Natural killer cell (primary cell): ENCODE measurements at regions of chr3 and their contacts with region 1.

Region 1: DNA sequence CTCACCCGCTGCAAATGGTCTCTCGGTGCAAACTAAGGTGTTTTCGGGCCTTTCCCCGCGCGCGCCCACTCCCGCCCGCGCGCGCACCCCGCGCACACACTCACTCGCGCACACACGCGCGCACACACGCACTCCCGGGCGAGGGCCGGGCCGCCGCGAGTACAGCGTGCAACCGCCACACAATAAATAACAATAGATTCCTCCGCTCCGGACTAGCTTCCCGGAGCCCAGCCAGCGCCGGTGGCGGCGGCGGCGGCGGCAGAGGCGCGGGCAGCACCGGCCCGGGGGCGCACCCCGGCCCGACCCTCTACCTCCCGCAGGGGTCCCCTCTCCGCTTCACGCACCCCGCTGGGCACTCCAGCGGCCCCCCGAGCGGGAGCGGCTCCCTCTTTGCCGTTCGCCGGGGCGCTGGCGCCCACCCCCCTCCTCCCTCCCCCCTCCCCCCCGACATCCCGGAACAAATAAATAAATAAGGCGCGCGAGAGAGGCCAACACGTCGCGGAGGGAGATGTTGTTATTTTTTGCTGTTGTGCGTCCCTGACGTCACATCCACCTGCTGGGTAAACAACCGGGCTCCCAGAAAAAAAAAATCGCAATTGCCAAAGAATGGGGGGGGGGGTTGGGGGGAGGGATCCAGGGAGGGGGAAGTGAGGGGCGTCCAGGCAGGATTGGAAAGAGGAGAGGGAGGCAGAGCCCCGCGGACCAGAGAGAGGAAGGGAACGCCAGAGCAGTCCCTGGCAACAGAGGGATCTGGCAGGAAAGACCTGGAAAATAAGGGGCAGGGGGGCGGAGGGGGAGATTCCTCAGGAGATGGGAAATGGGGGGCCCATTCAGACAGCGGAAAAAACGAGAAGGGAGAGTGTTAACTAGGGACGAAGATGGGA is at the start of gene FOXP1:
- DNase-seq: peak; percentile 63 to 89
- ATAC-seq: peak; percentile 60 to 75 (median 67)
- H3K4me3 ChIP-seq: peak within 1 kb of the TSS; percentile 77
- H3K4me3 Mint-ChIP-seq: peak within 1 kb of the TSS; percentile 98
- H3K27ac ChIP-seq: peak within 1 kb of the TSS; percentile 80
- H3K27ac Mint-ChIP-seq: peak within 1 kb of the TSS; percentile 90 to 94
- H3K4me1 ChIP-seq: peaks cover 25% of the 10 kb centered on the region
- H3K4me1 Mint-ChIP-seq: peaks cover 27 to 47% of the 10 kb centered on the region in 2 donors
- H3K27me3 ChIP-seq: no peaks in the 10 kb centered on the region
- H3K27me3 Mint-ChIP-seq: peaks cover 6 to 11% of the 10 kb centered on the region in 2 donors
- CTCF ChIP-seq: no peak
- total RNA-seq, gene FOXP1: 166 to 185 (median 166) TPM

Region 2: DNA sequence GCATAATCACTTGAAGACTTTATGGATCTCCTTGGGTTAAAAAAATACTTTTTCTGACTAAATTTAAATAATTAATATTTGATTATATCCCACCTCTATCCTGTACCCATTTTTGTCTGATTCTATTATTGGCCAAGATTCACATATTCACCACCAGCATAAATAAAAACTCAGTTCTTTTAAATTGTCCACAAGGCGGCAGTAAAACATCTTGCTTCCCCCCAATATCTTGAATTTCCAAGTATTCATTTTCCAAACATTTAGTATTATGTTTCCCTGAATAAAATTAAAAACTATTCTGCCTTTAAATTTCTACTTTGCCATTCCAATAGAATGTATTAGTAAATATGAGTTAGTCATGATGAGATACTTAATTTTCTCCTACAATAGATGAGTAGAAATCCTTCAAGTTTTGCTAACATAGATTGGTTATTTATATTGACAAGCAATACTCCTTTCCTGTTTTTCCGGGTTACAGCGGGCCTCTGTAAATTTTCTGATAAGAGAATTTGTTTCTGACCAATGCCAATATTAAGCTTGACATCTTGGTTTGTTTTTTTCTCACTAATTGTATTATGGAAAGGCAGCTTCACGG is 1052.6 kb before region 1 on chr3:
- intact Hi-C with region 1: loop called (anchors 1 kb)
- DNase-seq: peak in 1 of 2 donors; percentile 31
- ATAC-seq: no peak
- H3K4me3 ChIP-seq: no peak overlapping the region
- H3K4me3 Mint-ChIP-seq: no peak overlapping the region
- H3K27ac ChIP-seq: no peak overlapping the region
- H3K27ac Mint-ChIP-seq: no peak overlapping the region
- H3K4me1 ChIP-seq: no peaks in the 10 kb centered on the region
- H3K4me1 Mint-ChIP-seq: no peaks in the 10 kb centered on the region
- H3K27me3 ChIP-seq: no peaks in the 10 kb centered on the region
- H3K27me3 Mint-ChIP-seq: peaks cover 4 to 16% of the 10 kb centered on the region in 2 donors
- CTCF ChIP-seq: peak; percentile 31

Region 3: GRCh38 chr3:71006810-71007785 is 576.7 kb before region 1 on chr3:
- intact Hi-C with region 1: loop called (anchors 1 kb)
- DNase-seq: peak in 1 of 2 donors; percentile 63
- ATAC-seq: peak; percentile 61 to 76 (median 76)
- H3K4me3 ChIP-seq: no peak overlapping the region
- H3K4me3 Mint-ChIP-seq: no peak overlapping the region
- H3K27ac ChIP-seq: no peak overlapping the region
- H3K27ac Mint-ChIP-seq: peak overlapping the region; percentile 69 to 87
- H3K4me1 ChIP-seq: peaks cover 12% of the 10 kb centered on the region
- H3K4me1 Mint-ChIP-seq: peaks cover 52% of the 10 kb centered on the region in 2 donors
- H3K27me3 ChIP-seq: no peaks in the 10 kb centered on the region
- H3K27me3 Mint-ChIP-seq: no peaks in the 10 kb centered on the region
- CTCF ChIP-seq: peak; percentile 80

Region 4: DNA sequence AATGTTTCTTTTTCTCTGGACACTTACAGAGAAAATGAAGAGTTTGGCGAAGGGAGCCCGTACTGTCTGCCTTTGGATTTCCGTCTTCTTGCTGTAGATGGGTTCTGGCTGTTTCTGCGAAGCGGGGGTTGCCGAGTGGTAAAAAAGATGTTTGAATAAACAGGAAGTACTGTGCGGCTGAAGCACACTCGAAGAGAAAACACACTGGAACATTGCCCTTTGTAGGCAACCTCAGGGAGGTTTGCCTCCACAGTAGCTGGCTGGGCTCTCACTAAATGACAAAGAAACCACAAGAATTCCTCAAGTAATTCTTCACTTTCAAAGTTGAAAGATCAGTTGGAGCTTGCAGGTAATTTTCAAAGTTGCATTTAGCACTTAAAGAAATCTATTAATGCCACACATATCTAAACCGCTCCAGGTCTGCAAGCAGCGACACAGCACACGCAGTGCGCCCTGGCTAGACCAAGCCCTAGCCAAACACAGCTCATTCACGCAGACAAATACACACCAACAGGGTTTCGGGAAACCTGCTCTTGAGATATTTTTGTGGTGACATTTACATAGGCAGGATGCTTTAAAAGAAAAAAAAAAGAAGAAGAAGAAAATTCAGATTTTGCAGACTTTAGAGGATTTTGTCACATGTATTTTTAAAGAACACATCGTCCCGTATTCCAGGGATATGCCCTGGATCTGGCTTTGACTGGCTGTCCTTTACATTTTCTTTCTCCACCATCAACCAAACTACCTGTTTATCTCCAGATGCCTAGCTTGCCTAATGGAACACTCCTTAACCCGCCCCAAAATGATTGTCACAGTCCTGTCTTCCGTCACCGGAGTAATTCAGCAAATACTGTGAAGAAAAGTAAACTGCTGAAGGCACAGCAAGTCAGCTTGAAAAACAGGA is 453.1 kb before region 1 on chr3:
- intact Hi-C with region 1: loop called (anchors 2 kb)
- DNase-seq: peak; percentile 62 to 88
- ATAC-seq: peak; percentile 74 to 87 (median 84)
- H3K4me3 ChIP-seq: peak overlapping the region; percentile 63
- H3K4me3 Mint-ChIP-seq: peak overlapping the region; percentile 95
- H3K27ac ChIP-seq: peak overlapping the region; percentile 86
- H3K27ac Mint-ChIP-seq: peak overlapping the region; percentile 93 to 98
- H3K4me1 ChIP-seq: peaks cover 18% of the 10 kb centered on the region
- H3K4me1 Mint-ChIP-seq: peaks cover 62 to 69% of the 10 kb centered on the region in 2 donors
- H3K27me3 ChIP-seq: no peaks in the 10 kb centered on the region
- H3K27me3 Mint-ChIP-seq: no peaks in the 10 kb centered on the region
- CTCF ChIP-seq: no peak

Region 5: GRCh38 chr3:71305231-71306206 is 278.3 kb before region 1 on chr3:
- intact Hi-C with region 1: loop called (anchors 5 kb)
- DNase-seq: peak in 1 of 2 donors; percentile 45
- ATAC-seq: peak; percentile 64 to 74 (median 64)
- H3K4me3 ChIP-seq: peak overlapping the region; percentile 41
- H3K4me3 Mint-ChIP-seq: peak overlapping the region; percentile 93
- H3K27ac ChIP-seq: peak overlapping the region; percentile 57
- H3K27ac Mint-ChIP-seq: peak overlapping the region; percentile 80 to 93
- H3K4me1 ChIP-seq: peaks cover 14% of the 10 kb centered on the region
- H3K4me1 Mint-ChIP-seq: peaks cover 58 to 60% of the 10 kb centered on the region in 2 donors
- H3K27me3 ChIP-seq: no peaks in the 10 kb centered on the region
- H3K27me3 Mint-ChIP-seq: no peaks in the 10 kb centered on the region
- CTCF ChIP-seq: no peak

Region 6: DNA sequence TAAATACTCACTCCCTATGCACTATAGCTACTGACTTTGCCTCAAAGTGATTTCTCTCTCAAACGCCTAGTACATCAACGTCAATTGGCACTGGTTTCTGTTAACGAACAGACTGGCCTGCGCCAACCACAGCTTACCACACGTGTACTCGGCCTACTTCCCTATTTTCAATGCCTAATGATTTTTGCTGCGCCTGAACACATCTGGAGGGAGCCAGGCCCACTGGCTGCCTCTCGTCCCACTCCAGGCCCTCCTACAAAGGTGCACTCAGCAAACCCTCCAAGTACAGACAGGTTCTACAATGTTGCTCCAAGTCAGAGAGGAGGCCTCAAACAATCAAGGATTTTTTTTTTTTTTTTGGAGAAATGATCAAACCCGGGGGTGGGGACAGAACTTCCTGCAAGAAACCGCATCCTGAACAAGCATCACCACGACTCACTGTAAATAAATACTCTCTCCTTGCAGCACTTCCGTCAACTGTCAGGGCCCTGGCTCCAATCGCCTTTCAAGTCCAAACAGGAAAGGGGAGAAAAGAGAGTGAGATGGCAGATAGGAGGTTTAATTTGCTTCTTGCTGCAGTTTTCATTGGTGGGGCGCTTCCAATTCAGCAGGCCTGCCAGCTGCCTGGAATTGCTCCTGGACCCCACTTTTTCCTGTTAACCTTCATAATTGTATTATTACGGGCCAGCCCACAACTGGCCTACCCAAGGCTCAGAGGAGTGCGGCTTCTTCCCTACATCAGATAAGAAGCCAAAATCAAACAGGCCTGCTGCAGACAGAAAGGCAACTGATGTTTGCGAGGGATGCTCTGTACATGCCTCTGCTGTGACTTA is 139.6 kb before region 1 on chr3:
- intact Hi-C with region 1: loop called (anchors 5 kb)
- DNase-seq: peak; percentile 48 to 94
- ATAC-seq: peak; percentile 78 to 88 (median 84)
- H3K4me3 ChIP-seq: no peak overlapping the region
- H3K4me3 Mint-ChIP-seq: peak overlapping the region; percentile 78
- H3K27ac ChIP-seq: peak overlapping the region; percentile 93
- H3K27ac Mint-ChIP-seq: peak overlapping the region; percentile 93 to 96
- H3K4me1 ChIP-seq: peaks cover 81% of the 10 kb centered on the region
- H3K4me1 Mint-ChIP-seq: peaks cover 71 to 75% of the 10 kb centered on the region in 2 donors
- H3K27me3 ChIP-seq: no peaks in the 10 kb centered on the region
- H3K27me3 Mint-ChIP-seq: no peaks in the 10 kb centered on the region
- CTCF ChIP-seq: no peak